ENCODE measurements at regions of chr4 and their contacts with region 1.

Region 1: DNA sequence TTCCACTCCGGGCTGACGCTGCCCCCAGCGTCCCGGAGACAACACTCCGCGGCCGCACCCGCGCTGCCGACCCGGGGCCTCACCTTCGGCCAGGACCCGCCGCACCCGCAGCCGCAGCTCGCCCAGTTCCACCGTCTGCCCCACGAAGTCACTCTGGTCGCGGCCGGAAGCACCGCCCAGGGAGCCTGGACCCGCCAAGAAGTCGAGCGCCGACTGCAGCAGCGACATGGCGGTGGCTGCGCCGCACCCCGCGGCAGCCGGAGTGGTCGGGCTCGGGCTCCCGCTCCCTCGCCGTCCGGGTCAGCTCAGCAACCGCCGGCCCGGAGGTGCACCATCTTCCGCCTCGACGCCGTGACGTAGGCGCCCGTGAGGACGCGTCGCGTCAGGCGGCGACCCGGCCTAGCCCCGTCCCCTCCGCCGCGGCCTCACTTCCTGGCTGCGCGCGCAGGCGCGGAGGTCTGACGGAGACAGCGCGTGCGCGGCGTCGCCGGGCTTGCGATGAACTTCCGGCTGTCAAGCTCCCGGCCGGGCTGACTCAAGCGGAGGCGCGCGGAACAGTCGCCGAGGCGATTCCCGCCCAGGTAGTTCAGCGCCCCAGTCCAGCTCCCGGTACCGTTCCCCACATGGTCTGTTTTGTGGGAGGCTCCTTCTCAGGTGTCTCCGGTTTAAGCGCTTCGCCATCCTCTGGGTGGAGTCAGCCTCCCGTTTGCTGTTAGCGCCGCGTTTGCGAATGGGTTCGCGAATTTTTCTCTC is at the starts of genes GAK and TMEM175:
- DNase-seq: peak; percentile 91 to 99 (median 96)
- ATAC-seq: peak; percentile 90
- H3K4me3 ChIP-seq: peak within 1 kb of the TSS; percentile 97
- H3K4me3 Mint-ChIP-seq: peak within 1 kb of the TSS; percentile 98
- H3K27ac ChIP-seq: peak within 1 kb of the TSS; percentile 75 to 89
- H3K27ac Mint-ChIP-seq: peak within 1 kb of the TSS; percentile 98
- H3K4me1 ChIP-seq: peaks cover 43% of the 10 kb centered on the region
- H3K4me1 Mint-ChIP-seq: peaks cover 42% of the 10 kb centered on the region
- H3K27me3 ChIP-seq: no peaks in the 10 kb centered on the region
- H3K27me3 Mint-ChIP-seq: no peaks in the 10 kb centered on the region
- CTCF ChIP-seq: no peak
- total RNA-seq, gene GAK: 130 to 131 TPM
- total RNA-seq, gene TMEM175: 51.3 to 57.7 TPM

Region 2: GRCh38 chr4:504076-504475 is 428.1 kb before region 1 on chr4:
- CTCF ChIA-PET with region 1: no interaction called
- POLR2A ChIA-PET with region 1: no interaction called
- intact Hi-C with region 1: loop called in 1 of 2 experiments (anchors 10 kb)
- DNase-seq: no peak
- ATAC-seq: no peak
- H3K4me3 ChIP-seq: no peak overlapping the region
- H3K4me3 Mint-ChIP-seq: no peak overlapping the region
- H3K27ac ChIP-seq: no peak overlapping the region
- H3K27ac Mint-ChIP-seq: no peak overlapping the region
- H3K4me1 ChIP-seq: peaks cover 31% of the 10 kb centered on the region
- H3K4me1 Mint-ChIP-seq: peaks cover 58% of the 10 kb centered on the region
- H3K27me3 ChIP-seq: no peaks in the 10 kb centered on the region
- H3K27me3 Mint-ChIP-seq: no peaks in the 10 kb centered on the region
- CTCF ChIP-seq: no peak

Region 3: DNA sequence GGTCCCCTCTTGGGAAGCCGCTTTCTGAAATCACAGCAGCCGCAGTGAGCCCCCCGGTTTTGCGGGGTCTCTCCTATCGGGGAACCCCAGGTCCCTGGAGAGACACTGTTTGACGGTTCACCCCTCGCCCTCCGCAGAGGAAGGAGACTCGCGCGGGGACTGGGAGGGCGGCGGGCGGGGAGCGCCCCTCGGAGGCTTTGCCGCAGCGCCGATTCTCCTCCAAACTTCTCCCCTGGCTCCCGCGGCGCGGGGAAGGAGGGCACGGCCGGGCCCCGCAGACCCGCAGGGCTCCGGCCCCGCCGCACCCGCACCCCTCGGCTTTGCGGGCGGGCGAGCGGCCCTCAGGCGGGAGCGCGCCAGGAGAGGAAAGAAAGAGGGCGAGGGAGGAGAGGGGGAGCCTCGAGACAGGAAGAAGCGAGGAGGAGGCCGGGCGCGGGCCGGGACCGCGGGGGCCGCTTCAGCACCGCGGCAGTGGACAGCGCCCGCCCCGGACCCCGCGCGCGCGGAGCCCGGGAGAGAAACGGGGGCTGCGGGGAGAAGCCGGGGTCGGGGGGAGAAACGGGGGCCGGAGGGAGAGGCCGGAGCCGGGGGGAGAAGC is 106.8 kb before region 1 on chr4:
- CTCF ChIA-PET with region 1: no interaction called
- POLR2A ChIA-PET with region 1: no interaction called
- intact Hi-C with region 1: loop called in 1 of 2 experiments (anchors 5 kb)
- DNase-seq: peak in 11 of 14 experiments; percentile 7 to 70 (median 31)
- ATAC-seq: peak; percentile 80
- H3K4me3 ChIP-seq: no peak overlapping the region
- H3K4me3 Mint-ChIP-seq: no peak overlapping the region
- H3K27ac ChIP-seq: no peak overlapping the region
- H3K27ac Mint-ChIP-seq: no peak overlapping the region
- H3K4me1 ChIP-seq: peaks cover 19% of the 10 kb centered on the region
- H3K4me1 Mint-ChIP-seq: peaks cover 6% of the 10 kb centered on the region
- H3K27me3 ChIP-seq: peaks cover 52 to 69% of the 10 kb centered on the region in 2 experiments
- H3K27me3 Mint-ChIP-seq: peaks cover 66% of the 10 kb centered on the region
- CTCF ChIP-seq: no peak

Region 4: DNA sequence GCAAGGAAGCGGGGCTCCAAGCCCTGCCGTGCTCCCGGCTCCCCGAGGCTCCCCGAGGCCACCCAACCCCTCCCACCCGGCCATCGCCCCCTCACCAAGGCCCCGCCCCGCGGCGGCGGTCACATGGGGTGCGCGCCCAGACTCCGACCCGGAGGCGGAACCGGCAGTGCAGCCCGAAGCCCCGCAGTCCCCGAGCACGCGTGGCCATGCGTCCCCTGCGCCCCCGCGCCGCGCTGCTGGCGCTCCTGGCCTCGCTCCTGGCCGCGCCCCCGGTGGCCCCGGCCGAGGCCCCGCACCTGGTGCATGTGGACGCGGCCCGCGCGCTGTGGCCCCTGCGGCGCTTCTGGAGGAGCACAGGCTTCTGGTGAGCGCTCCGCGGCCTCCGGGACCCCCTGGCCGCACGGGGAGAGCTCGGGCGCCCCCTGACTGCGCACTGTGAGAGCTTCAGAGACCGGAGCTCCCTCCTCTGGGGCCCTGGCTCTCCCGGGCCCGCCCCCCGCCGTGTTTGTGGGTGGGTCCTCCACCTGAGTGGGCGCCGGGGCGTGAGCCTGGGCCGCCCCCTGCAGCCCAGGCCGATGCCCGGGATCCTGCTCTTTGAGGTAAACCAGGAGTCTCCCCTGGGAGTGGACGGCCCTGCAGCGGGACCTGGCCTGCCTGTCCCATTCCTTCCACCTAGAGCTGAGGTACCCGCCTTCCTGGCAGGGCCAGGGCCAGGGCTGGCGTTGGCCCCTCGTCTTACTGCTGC is 54.9 kb after region 1 on chr4 and contains the start of gene IDUA:
- CTCF ChIA-PET with region 1: interaction called, 11 read pairs
- POLR2A ChIA-PET with region 1: interaction called, 17 read pairs
- intact Hi-C with region 1: loop called (anchors 5 kb)
- DNase-seq: peak; percentile 73 to 93 (median 86)
- ATAC-seq: peak; percentile 84
- H3K4me3 ChIP-seq: peak within 1 kb of the TSS; percentile 78
- H3K4me3 Mint-ChIP-seq: peak within 1 kb of the TSS; percentile 94
- H3K27ac ChIP-seq: peak within 1 kb of the TSS; percentile 41 to 46
- H3K27ac Mint-ChIP-seq: peak within 1 kb of the TSS; percentile 82
- H3K4me1 ChIP-seq: peaks cover 36% of the 10 kb centered on the region
- H3K4me1 Mint-ChIP-seq: peaks cover 25% of the 10 kb centered on the region
- H3K27me3 ChIP-seq: no peaks in the 10 kb centered on the region
- H3K27me3 Mint-ChIP-seq: no peaks in the 10 kb centered on the region
- CTCF ChIP-seq: peak; percentile 57
- total RNA-seq, gene IDUA: 70.2 to 77.8 TPM

Region 5: DNA sequence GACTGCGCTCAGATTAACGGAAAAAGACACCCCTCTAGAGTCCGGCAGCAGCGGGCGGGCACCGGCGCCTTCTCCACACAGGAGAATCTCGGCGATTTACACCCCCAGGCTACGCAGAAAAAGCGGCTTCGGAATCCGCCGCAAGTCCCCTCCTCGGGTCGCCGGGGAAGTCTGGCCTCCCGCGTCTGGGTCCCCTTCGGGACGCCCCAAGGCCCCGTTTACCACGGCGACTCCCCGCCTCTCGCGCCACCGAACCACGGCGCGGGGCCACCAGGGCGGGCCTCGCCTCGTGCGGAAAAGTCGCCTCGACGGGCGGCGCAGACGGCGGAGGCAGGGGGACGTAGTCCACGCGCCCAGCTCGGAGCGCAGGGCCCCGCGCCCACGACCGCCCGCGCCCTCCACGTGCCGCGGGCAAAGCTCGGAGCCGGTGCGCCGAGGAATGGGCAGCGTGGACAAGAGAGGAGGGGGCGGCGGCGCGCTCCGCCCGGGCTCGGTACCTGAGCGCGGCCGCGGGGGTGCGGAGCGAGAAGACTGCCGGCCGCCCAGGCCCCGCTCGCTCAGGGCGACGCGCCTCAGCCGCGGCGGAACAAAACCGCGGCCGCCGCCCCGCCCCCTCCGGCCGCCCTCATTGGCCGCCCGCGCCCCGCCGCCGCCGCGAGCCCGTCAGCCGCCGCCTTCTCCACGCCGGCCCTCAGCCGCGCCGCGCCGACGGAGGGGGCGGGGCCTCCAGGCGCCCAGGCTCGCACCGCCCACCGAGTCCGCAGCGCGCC is 751.8 kb after region 1 on chr4 and contains the start of gene FAM53A:
- CTCF ChIA-PET with region 1: no interaction called
- POLR2A ChIA-PET with region 1: no interaction called
- intact Hi-C with region 1: loop called in 1 of 2 experiments (anchors 5 kb)
- DNase-seq: peak in 11 of 14 experiments; percentile 7 to 96 (median 41)
- ATAC-seq: peak; percentile 91
- H3K4me3 ChIP-seq: peak within 1 kb of the TSS; percentile 58
- H3K4me3 Mint-ChIP-seq: peak within 1 kb of the TSS; percentile 93
- H3K27ac ChIP-seq: no peak within 1 kb of the TSS
- H3K27ac Mint-ChIP-seq: peak within 1 kb of the TSS; percentile 85
- H3K4me1 ChIP-seq: peaks cover 19% of the 10 kb centered on the region
- H3K4me1 Mint-ChIP-seq: peaks cover 13% of the 10 kb centered on the region
- H3K27me3 ChIP-seq: no peaks in the 10 kb centered on the region
- H3K27me3 Mint-ChIP-seq: no peaks in the 10 kb centered on the region
- CTCF ChIP-seq: no peak
- total RNA-seq, gene FAM53A: 0.93 to 2.4 TPM